Mucosa of descending colon (tissue), 3 donors: ENCODE measurements at regions of chr11 and their contacts with region 1.

Region 1: GRCh38 chr11:47259178-47259977 is 1.6 kb downstream of the NR1H3 start:
- DNase-seq: peak; percentile 71 to 81 (median 81)
- ATAC-seq: peak; percentile 86
- H3K4me3 ChIP-seq: no peak overlapping the region
- H3K4me1 ChIP-seq: peaks cover 34% of the 10 kb centered on the region
- CTCF ChIP-seq: no peak

Region 2: GRCh38 chr11:47111318-47111804 is 148.0 kb before region 1 on chr11:
- intact Hi-C with region 1: no loop called
- DNase-seq: no peak
- ATAC-seq: peak; percentile 42
- H3K4me3 ChIP-seq: no peak overlapping the region
- H3K4me1 ChIP-seq: no peaks in the 10 kb centered on the region
- CTCF ChIP-seq: no peak

Region 3: DNA sequence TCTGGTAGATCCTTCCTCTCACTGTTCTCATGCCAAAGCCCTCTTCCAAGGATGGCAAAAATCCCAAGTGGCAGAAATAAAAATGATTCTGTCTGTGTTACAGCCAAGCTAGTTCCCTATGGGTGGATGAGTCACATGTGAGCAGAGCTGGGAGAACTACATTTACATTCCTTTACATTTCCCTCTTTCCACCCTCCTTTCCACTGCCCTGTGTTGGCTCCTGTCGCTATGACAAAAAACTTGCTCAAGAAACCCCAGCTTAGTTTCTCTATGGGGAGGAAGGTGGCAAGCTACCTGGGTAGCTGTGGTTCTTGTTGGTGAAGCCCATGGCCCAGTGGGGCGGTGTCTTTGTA is 54.8 kb before region 1 on chr11:
- intact Hi-C with region 1: no loop called
- DNase-seq: no peak
- ATAC-seq: peak; percentile 20
- H3K4me3 ChIP-seq: no peak overlapping the region
- H3K4me1 ChIP-seq: no peaks in the 10 kb centered on the region
- CTCF ChIP-seq: no peak

Region 4: GRCh38 chr11:47216121-47216798 is 43.1 kb before region 1 on chr11:
- intact Hi-C with region 1: loop called in 1 of 2 experiments (anchors 5 kb)
- DNase-seq: peak; percentile 58 to 78 (median 76)
- ATAC-seq: peak; percentile 28
- H3K4me3 ChIP-seq: no peak overlapping the region
- H3K4me1 ChIP-seq: peaks cover 17% of the 10 kb centered on the region
- CTCF ChIP-seq: no peak

Region 5: GRCh38 chr11:47317064-47317828 is 57.9 kb after region 1 on chr11:
- intact Hi-C with region 1: no loop called
- DNase-seq: no peak
- ATAC-seq: no peak
- H3K4me3 ChIP-seq: no peak overlapping the region
- H3K4me1 ChIP-seq: no peaks in the 10 kb centered on the region
- CTCF ChIP-seq: no peak

Region 6: DNA sequence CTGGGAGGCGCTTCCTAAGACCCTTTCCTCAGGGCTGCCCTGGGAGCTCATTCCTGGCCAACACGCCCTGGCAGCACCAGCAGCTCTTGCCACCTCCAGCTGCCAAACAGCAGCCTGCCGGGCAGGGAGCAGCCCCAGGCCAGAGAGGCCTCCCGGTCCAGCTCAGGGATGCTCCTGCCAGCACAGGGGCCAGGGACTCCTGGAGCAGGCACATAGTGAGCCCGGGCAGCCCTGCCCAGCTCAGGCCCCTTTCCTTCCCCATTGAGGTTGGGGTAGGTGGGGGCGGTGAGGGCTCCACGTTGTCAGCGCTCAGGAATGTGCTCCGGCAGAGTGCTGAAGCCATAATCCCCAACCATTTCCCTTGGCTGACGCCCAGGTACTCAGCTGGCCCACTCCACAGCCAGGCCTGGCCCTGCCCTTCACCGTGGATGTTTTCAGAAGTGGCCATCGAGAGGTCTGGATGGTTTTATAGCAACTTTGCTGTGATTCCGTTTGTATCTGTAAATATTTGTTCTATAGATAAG is 156.6 kb after region 1 on chr11:
- intact Hi-C with region 1: no loop called
- DNase-seq: peak; percentile 70 to 78 (median 74)
- ATAC-seq: peak; percentile 61
- H3K4me3 ChIP-seq: no peak overlapping the region
- H3K4me1 ChIP-seq: peaks cover 13% of the 10 kb centered on the region
- CTCF ChIP-seq: no peak